ENCODE measurements at regions of chr15 and their contacts with region 1.

Region 1: GRCh38 chr15:99504823-99505551 is 60.8 kb upstream of the MEF2A start:
- DNase-seq: no peak
- H3K4me3 Mint-ChIP-seq: no peak overlapping the region
- H3K27ac Mint-ChIP-seq: peak overlapping the region; percentile 73
- H3K4me1 Mint-ChIP-seq: peaks cover 60% of the 10 kb centered on the region
- H3K27me3 Mint-ChIP-seq: no peaks in the 10 kb centered on the region

Region 2: GRCh38 chr15:99282121-99282520 is 222.9 kb before region 1 on chr15:
- intact Hi-C with region 1: loop called (anchors 2 kb)
- DNase-seq: no peak
- H3K4me3 Mint-ChIP-seq: no peak overlapping the region
- H3K27ac Mint-ChIP-seq: peak overlapping the region; percentile 63
- H3K4me1 Mint-ChIP-seq: peaks cover 68% of the 10 kb centered on the region
- H3K27me3 Mint-ChIP-seq: no peaks in the 10 kb centered on the region

Region 3: DNA sequence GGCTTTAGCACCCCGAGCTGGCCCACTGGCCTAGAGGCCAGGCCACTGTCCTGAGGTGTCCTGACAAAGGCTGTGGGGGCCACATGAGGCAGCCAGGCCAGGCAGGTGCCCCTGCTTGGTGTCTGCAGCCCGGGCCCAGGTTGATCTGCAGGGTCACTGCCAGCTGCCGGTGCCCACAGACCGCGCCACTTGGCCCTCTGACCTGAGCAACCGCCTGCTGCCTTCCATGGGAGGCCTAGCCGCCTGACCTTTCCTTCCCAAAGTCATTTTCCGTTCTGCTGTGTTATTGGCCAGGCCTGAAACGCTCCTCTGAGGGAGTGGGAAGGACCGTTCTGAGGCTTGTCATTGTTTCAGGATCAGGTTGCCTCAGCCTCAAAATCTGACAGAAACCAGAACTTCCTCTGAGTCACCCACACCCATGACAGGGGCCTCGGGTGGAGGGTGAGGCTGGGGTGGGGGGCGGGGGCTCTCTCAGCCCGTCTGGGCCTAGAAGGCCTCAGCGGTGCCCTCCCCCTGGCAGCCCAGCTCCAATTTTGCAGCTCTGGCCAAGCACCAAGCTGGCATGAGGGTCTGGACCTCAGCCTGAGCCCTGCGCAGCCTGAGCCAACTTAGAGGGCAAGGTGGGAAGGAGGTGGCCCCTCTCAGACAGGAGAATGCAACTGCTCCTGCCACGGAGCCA is 79.9 kb before region 1 on chr15:
- intact Hi-C with region 1: loop called (anchors 1 kb)
- DNase-seq: peak; percentile 49
- H3K4me3 Mint-ChIP-seq: peak overlapping the region; percentile 68
- H3K27ac Mint-ChIP-seq: peak overlapping the region; percentile 92
- H3K4me1 Mint-ChIP-seq: peaks cover 63% of the 10 kb centered on the region
- H3K27me3 Mint-ChIP-seq: no peaks in the 10 kb centered on the region

Region 4: GRCh38 chr15:99442252-99442897 is 62.6 kb before region 1 on chr15:
- intact Hi-C with region 1: loop called (anchors 2 kb)
- DNase-seq: no peak
- H3K4me3 Mint-ChIP-seq: no peak overlapping the region
- H3K27ac Mint-ChIP-seq: peak overlapping the region; percentile 74
- H3K4me1 Mint-ChIP-seq: peaks cover 42% of the 10 kb centered on the region
- H3K27me3 Mint-ChIP-seq: peaks cover 15% of the 10 kb centered on the region

Region 5: GRCh38 chr15:99450896-99451358 is 54.1 kb before region 1 on chr15:
- intact Hi-C with region 1: loop called (anchors 2 kb)
- DNase-seq: peak; percentile 45
- H3K4me3 Mint-ChIP-seq: peak overlapping the region; percentile 57
- H3K27ac Mint-ChIP-seq: peak overlapping the region; percentile 23
- H3K4me1 Mint-ChIP-seq: peaks cover 39% of the 10 kb centered on the region
- H3K27me3 Mint-ChIP-seq: peaks cover 6% of the 10 kb centered on the region

Region 6: DNA sequence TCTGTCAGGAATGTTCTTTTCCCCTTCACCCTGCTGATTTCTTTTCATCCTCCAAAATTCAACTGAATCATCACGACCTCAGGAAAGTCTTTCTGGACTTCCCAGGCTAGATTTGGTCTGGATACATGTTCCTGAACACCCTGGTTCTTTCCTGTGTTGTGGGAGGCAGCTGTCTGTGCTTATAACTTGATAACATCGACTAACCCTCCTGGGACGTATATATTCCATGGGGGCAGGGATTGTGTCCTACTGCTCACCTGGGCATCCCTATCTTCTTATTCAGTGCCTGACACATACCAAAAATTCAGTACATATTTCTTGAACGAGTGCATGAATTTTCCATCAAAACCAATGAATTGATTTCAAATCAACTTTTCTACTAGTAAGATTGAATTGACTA is 13.2 kb after region 1 on chr15:
- intact Hi-C with region 1: no loop called
- DNase-seq: no peak
- H3K4me3 Mint-ChIP-seq: no peak overlapping the region
- H3K27ac Mint-ChIP-seq: no peak overlapping the region
- H3K4me1 Mint-ChIP-seq: peaks cover 4% of the 10 kb centered on the region
- H3K27me3 Mint-ChIP-seq: peaks cover 2% of the 10 kb centered on the region

Region 7: GRCh38 chr15:99550077-99550476 is 45.1 kb after region 1 on chr15:
- intact Hi-C with region 1: loop called (anchors 5 kb)
- DNase-seq: no peak
- H3K4me3 Mint-ChIP-seq: no peak overlapping the region
- H3K27ac Mint-ChIP-seq: peak overlapping the region; percentile 43
- H3K4me1 Mint-ChIP-seq: peaks cover 8% of the 10 kb centered on the region
- H3K27me3 Mint-ChIP-seq: peaks cover 3% of the 10 kb centered on the region